B cell (primary cell): ENCODE measurements at regions of chr5 and their contacts with region 1.

Region 1: DNA sequence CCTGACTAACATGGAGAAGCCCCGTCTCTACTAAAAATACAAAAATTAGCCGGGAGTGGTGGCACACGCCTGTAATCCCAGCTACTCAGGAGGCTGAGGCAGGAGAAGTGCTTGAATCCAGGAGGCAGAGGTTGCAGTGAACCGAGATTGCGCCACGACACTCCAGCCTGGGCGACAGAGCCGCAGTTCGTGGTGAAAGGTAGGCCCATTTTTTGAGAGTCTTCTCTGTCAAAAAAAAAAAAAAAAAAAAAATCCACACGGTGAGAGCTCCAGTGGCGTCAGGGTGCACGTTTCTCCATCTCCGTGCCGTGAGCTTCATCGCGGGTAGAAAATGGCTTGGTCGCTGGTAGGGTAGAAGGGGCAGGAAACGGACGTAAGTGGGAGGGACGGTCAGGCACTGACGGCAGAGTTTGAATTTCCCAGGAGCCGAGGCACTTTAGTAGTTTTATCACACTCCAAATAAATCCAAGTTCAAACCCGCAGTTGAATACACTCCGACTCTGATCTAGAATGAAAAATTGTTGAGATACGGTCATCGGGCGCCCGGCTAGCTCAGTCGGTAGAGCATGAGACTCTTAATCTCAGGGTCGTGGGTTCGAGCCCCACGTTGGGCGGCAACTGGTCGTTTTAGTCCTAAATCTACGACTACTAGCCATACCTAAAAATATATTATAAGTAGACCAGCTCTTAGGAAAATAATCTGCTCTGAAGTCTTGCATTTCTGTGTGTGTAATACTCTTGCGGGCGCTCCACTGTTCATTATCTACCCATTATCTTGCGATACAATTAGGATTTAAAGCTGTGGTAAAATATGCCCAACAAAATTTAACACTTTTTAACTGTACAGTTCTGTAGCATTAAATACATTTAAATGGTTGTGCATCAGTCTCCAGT is 2.5 kb upstream of the TRIM7 start:
- DNase-seq: peak; percentile 83
- ATAC-seq: peak; percentile 50
- H3K4me3 ChIP-seq: peak overlapping the region; percentile 54 to 71 (median 68)
- H3K4me3 Mint-ChIP-seq: peak overlapping the region; percentile 98
- H3K27ac ChIP-seq: peak overlapping the region in 1 of 2 donors; percentile 57
- H3K27ac Mint-ChIP-seq: peak overlapping the region; percentile 95
- H3K4me1 ChIP-seq: peaks cover 23 to 35% of the 10 kb centered on the region in 2 donors
- H3K4me1 Mint-ChIP-seq: peaks cover 40% of the 10 kb centered on the region
- H3K27me3 ChIP-seq: peaks cover 0 to 26% (median 12%) of the 10 kb centered on the region in 4 experiments
- H3K27me3 Mint-ChIP-seq: peaks cover 14% of the 10 kb centered on the region
- CTCF ChIP-seq: no peak

Region 2: DNA sequence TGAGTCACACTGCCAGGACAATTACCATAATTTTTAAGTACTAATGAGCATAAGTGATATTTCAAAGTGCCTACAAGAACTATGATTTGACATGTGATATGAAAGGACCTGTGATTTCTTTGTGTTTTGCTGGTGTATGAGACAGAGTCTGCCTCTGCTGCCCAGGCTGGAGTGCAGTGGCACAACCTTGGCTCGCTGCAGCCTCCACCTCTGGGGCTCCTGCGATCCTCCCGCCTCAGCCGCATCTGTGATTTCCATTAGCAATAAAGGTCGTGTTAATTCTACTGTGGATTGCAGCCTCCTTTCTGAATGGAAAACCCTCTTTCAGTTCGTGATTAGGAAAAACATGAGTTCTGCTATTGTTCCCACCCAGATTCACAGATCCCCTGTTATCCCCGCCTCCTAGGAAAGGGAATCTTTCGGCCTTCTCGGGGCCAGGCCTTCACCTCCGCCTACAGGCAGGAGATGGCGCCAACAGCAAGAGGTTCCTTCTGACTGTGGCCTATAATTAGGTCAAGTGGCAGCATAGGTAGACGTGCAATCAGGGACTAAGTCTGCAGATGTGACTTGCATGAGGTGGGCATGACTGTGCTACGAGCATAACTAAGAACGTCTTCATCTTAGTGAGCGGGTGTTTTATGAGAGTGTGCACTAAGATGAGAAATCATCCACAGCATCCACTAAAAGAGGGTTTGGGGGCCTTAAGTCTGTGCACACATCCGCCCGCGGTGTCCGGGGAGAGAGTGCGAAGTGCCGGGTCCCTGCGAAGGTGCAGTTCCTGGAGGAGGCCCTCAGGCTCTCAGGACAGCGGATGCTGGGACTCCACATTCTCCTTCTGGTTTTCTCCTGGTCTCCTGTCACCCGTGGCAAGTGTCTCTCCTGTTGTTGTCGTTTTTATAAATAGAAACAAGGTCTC is 25.6 kb before region 1 on chr5:
- CTCF ChIA-PET with region 1: interaction called, 24 read pairs
- POLR2A ChIA-PET with region 1: interaction called, 6 read pairs
- intact Hi-C with region 1: no loop called
- DNase-seq: peak; percentile 85
- ATAC-seq: peak; percentile 74
- H3K4me3 ChIP-seq: no peak overlapping the region
- H3K4me3 Mint-ChIP-seq: peak overlapping the region; percentile 71
- H3K27ac ChIP-seq: no peak overlapping the region
- H3K27ac Mint-ChIP-seq: peak overlapping the region; percentile 70
- H3K4me1 ChIP-seq: peaks cover 8 to 33% of the 10 kb centered on the region in 2 donors
- H3K4me1 Mint-ChIP-seq: peaks cover 31% of the 10 kb centered on the region
- H3K27me3 ChIP-seq: no peaks in the 10 kb centered on the region
- H3K27me3 Mint-ChIP-seq: no peaks in the 10 kb centered on the region
- CTCF ChIP-seq: peak; percentile 81

Region 3: GRCh38 chr5:181243512-181244343 is 36.3 kb after region 1 on chr5 and contains the start of gene RACK1:
- CTCF ChIA-PET with region 1: interaction called, 6 read pairs
- POLR2A ChIA-PET with region 1: no interaction called
- intact Hi-C with region 1: loop called (anchors 5 kb)
- DNase-seq: peak; percentile 96
- ATAC-seq: peak; percentile 75
- H3K4me3 ChIP-seq: peak within 1 kb of the TSS; percentile 70 to 99 (median 98)
- H3K4me3 Mint-ChIP-seq: peak within 1 kb of the TSS; percentile 99
- H3K27ac ChIP-seq: peak within 1 kb of the TSS; percentile 91 to 92
- H3K27ac Mint-ChIP-seq: peak within 1 kb of the TSS; percentile 96
- H3K4me1 ChIP-seq: peaks cover 44 to 58% of the 10 kb centered on the region in 2 donors
- H3K4me1 Mint-ChIP-seq: peaks cover 66% of the 10 kb centered on the region
- H3K27me3 ChIP-seq: no peaks in the 10 kb centered on the region
- H3K27me3 Mint-ChIP-seq: no peaks in the 10 kb centered on the region
- CTCF ChIP-seq: no peak
- total RNA-seq, gene RACK1: 1,928 and 2,047 TPM in 2 replicates

Region 4: DNA sequence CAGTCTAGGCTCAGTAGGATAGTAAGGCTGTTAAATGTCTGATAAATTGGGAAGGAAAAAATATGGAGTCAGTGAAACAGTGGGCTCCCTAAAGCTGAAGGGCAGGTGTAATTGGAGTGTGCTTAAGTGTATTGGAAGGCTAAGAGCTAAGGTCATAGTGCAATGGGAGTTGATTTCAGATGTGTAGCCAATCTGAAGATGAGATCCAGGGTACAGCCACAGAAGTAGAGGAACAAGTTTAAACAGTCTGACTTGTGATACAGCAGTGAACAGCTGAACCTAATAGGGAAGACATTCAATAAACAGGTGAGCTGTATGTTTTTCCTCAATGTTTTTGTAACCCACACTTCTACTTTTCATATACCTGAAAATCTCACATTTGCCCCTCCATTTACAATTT is 47.2 kb after region 1 on chr5:
- CTCF ChIA-PET with region 1: no interaction called
- POLR2A ChIA-PET with region 1: no interaction called
- intact Hi-C with region 1: no loop called
- DNase-seq: no peak
- ATAC-seq: no peak
- H3K4me3 ChIP-seq: no peak overlapping the region
- H3K4me3 Mint-ChIP-seq: no peak overlapping the region
- H3K27ac ChIP-seq: no peak overlapping the region
- H3K27ac Mint-ChIP-seq: peak overlapping the region; percentile 33
- H3K4me1 ChIP-seq: peaks cover 11 to 21% of the 10 kb centered on the region in 2 donors
- H3K4me1 Mint-ChIP-seq: peaks cover 58% of the 10 kb centered on the region
- H3K27me3 ChIP-seq: no peaks in the 10 kb centered on the region
- H3K27me3 Mint-ChIP-seq: no peaks in the 10 kb centered on the region
- CTCF ChIP-seq: no peak